KBM-7 (cell line): ENCODE measurements at regions of chr3 and their contacts with region 1.

Region 1: GRCh38 chr3:67384760-67385397 is 269.5 kb downstream of the SUCLG2 start:
- DNase-seq: peak; percentile 63

Region 2: GRCh38 chr3:67500709-67501108 is 115.8 kb after region 1 on chr3:
- in situ Hi-C with region 1: no loop called
- DNase-seq: no peak

Region 3: DNA sequence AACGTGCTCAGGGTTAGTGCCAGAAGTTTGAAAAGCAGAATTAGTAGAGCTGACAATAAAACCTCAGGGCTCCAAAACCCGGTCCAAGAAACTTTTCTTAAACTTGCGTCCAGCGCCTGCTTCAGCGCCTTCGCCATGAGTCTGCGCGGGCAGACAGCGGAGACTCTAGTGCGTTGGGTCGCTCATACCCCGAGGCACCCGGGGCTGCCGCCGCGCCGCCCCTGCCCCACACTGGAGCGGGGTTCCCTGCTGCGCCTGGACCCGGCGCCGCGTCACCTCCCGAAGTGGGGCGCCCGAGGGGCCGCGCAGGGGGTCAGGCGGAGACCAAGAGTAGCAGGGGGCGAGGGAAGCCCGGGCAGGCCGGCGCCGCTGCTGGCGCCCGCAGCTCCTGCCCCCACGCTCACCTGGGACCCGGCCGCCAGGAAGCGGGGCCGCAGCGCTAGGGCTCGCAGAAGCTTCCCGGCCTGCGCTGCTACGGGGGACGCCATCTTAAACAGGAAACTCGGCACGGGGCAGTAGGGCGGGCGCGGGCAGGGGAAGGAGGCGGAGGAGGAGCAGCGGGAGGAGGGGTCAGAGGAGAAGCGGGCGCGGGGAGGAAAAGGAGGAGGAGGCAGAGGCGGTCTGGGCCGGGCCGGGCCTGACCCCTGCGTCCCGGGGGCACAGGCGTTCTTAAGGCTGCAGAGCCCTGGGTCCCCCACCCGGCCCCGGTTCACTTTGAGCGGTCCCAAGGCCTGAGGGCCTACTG is 269.4 kb after region 1 on chr3 and contains the start of gene SUCLG2:
- in situ Hi-C with region 1: loop called (anchors 25 kb)
- DNase-seq: peak; percentile 83

Region 4: DNA sequence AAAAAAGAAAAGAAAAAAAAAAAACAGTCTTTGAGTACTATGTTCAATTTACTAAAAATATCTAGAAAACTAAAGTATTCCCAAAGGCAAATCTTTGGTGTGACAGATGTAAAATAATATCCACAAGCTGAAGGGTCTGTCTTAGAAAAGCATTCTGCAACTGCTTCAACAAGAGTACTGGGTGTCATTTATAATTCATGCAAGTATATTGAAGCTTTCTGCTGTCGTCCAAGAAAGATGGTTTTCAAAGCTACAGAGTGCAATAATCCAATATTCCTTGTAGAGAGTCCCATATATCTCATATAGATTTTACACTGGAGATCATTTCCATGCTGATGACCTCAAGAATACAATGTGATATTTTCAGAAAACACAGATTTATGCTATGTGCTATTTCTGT is 360.4 kb after region 1 on chr3:
- in situ Hi-C with region 1: no loop called
- DNase-seq: no peak

Region 5: DNA sequence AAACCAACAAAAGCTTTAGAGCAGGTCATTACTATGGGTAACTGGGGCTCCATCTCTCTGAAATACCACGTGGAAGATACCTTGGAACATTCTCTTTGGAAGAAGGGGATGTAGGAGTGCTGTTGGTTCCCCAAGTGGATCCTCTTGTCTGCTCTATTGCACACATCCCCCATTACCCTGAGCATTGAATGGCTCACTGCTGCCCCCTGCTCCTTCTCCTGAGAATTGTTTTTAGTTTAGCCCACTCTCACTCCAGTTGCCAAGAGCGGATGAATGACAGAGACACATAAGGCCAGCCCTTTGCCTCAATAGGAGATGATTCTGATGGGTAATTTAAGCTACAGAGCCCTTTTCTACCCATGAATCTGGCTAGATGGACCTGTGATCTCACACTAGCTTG is 405.2 kb after region 1 on chr3:
- in situ Hi-C with region 1: loop called (anchors 25 kb)
- DNase-seq: peak; percentile 71